CD4-positive, alpha-beta memory T cell (primary cell): ENCODE measurements at regions of chrX and their contacts with region 1.

Region 1: DNA sequence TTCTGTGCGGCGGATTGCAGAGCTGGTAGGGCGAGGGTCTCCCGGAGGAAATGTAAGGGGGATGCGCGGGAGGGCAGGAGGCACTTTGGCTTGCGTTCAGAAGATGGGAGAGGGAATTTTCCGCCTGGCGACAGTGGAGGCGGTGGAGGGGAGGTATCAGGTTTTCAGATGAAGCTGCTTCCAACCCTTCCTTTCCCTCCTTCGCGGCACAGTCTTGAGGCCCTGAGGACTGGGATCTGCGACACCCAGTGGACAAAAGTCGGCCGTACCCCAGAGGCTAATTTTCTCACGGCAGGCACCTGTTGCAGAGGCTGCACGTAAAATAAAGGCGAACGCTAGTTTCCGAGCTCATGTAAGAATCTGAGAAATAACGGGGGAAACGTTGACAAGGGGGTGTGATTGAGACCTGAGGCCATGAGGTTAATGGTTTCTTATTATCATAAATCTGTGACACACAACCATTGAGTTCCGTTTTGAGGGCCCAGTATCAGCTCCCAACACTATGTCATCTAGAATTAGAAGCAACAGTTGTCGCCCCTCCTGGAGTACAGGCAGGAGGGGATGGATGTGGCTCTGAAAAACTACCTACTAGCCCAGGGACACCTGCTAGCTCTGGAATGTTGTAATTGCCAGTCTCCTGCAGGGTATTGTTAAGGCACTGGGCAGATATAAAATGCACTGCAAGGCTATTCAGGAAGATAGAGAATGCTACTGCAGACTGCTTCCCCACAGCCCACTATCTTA is 1.1 kb downstream of the ZCCHC18 start:
- DNase-seq: peak; percentile 38 to 61 (median 49)
- H3K4me3 ChIP-seq: peak overlapping the region; percentile 57 to 66
- H3K4me3 Mint-ChIP-seq: peak overlapping the region; percentile 87 to 95 (median 91)
- H3K27ac ChIP-seq: peak overlapping the region; percentile 64
- H3K27ac Mint-ChIP-seq: peak overlapping the region; percentile 78 to 92 (median 88)
- H3K4me1 ChIP-seq: peaks cover 39% of the 10 kb centered on the region
- H3K4me1 Mint-ChIP-seq: peaks cover 19 to 43% (median 29%) of the 10 kb centered on the region in 4 donors
- H3K27me3 ChIP-seq: no peaks in the 10 kb centered on the region
- H3K27me3 Mint-ChIP-seq: no peaks in the 10 kb centered on the region

Region 2: GRCh38 chrX:103918581-103919269 is 194.7 kb before region 1 on chrX:
- CTCF ChIA-PET with region 1: interaction called, 3 read pairs
- POLR2A ChIA-PET with region 1: interaction called, 8 read pairs
- intact Hi-C with region 1: loop called (anchors 5 kb)
- DNase-seq: peak; percentile 55 to 73 (median 62)
- H3K4me3 ChIP-seq: peak overlapping the region; percentile 36 to 70
- H3K4me3 Mint-ChIP-seq: peak overlapping the region; percentile 88 to 97 (median 94)
- H3K27ac ChIP-seq: peak overlapping the region; percentile 74
- H3K27ac Mint-ChIP-seq: peak overlapping the region; percentile 86 to 96 (median 91)
- H3K4me1 ChIP-seq: peaks cover 27% of the 10 kb centered on the region
- H3K4me1 Mint-ChIP-seq: peaks cover 21 to 35% (median 30%) of the 10 kb centered on the region in 4 donors
- H3K27me3 ChIP-seq: no peaks in the 10 kb centered on the region
- H3K27me3 Mint-ChIP-seq: no peaks in the 10 kb centered on the region

Region 3: DNA sequence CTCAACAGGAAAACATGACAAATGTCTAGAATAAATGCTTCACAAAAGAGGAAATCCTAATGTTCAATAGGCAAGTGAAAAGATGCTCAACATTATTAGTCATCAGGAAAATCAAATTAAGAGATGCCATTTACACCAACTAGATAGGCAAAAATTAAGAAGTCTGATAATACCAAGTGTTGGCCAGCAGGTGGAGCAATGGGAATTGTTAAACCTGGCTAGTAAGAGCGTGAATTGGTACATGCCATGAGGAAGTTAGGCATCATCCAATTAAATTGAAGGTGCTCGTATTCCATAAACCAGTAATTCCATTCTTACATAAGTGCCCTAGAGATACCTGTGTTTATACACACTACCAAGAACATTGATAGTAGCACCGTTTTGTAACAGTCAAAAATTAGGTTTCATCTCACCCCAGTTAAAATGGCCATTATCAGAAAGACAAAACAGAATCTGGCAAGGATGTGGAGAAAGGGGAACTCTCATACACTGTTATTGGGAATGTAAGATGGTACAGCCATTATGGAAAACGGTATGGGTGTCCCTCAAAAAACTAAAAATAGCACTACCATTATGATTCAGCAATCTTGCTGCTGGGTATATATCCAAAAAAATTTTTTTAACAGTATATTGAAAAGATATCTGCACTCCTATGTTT is 15.1 kb before region 1 on chrX:
- CTCF ChIA-PET with region 1: interaction called, 48 read pairs
- POLR2A ChIA-PET with region 1: interaction called, 29 read pairs
- intact Hi-C with region 1: loop called (anchors 1 kb)
- DNase-seq: peak; percentile 54 to 62 (median 60)
- H3K4me3 ChIP-seq: no peak overlapping the region
- H3K4me3 Mint-ChIP-seq: no peak overlapping the region
- H3K27ac ChIP-seq: no peak overlapping the region
- H3K27ac Mint-ChIP-seq: no peak overlapping the region
- H3K4me1 ChIP-seq: peaks cover 3% of the 10 kb centered on the region
- H3K4me1 Mint-ChIP-seq: peaks cover 0 to 3% (median 2%) of the 10 kb centered on the region in 4 donors
- H3K27me3 ChIP-seq: no peaks in the 10 kb centered on the region
- H3K27me3 Mint-ChIP-seq: peaks cover 0 to 4% of the 10 kb centered on the region in 2 donors

Region 4: GRCh38 chrX:104156630-104157529 is 43.5 kb after region 1 on chrX and contains the start of gene SLC25A53:
- CTCF ChIA-PET with region 1: interaction called, 5 read pairs
- POLR2A ChIA-PET with region 1: interaction called, 29 read pairs
- intact Hi-C with region 1: no loop called
- DNase-seq: peak; percentile 77 to 89 (median 81)
- H3K4me3 ChIP-seq: peak within 1 kb of the TSS; percentile 71 to 78
- H3K4me3 Mint-ChIP-seq: peak within 1 kb of the TSS; percentile 93 to 100 (median 96)
- H3K27ac ChIP-seq: peak within 1 kb of the TSS; percentile 73
- H3K27ac Mint-ChIP-seq: peak within 1 kb of the TSS; percentile 96 to 100 (median 99)
- H3K4me1 ChIP-seq: peaks cover 19% of the 10 kb centered on the region
- H3K4me1 Mint-ChIP-seq: peaks cover 4 to 33% (median 6%) of the 10 kb centered on the region in 4 donors
- H3K27me3 ChIP-seq: no peaks in the 10 kb centered on the region
- H3K27me3 Mint-ChIP-seq: no peaks in the 10 kb centered on the region
- total RNA-seq, gene SLC25A53: 20.9 to 21.0 TPM

Region 5: GRCh38 chrX:104172121-104172520 is 58.7 kb after region 1 on chrX:
- CTCF ChIA-PET with region 1: no interaction called
- POLR2A ChIA-PET with region 1: no interaction called
- intact Hi-C with region 1: no loop called
- DNase-seq: no peak
- H3K4me3 ChIP-seq: no peak overlapping the region
- H3K4me3 Mint-ChIP-seq: no peak overlapping the region
- H3K27ac ChIP-seq: no peak overlapping the region
- H3K27ac Mint-ChIP-seq: no peak overlapping the region
- H3K4me1 ChIP-seq: peaks cover 27% of the 10 kb centered on the region
- H3K4me1 Mint-ChIP-seq: peaks cover 20 to 38% (median 32%) of the 10 kb centered on the region in 4 donors
- H3K27me3 ChIP-seq: no peaks in the 10 kb centered on the region
- H3K27me3 Mint-ChIP-seq: no peaks in the 10 kb centered on the region